MCF 10A (cell line): ENCODE measurements at regions of chr3 and their contacts with region 1.

Region 1: GRCh38 chr3:197224034-197224444 is 74.4 kb downstream of the DLG1 start:
- DNase-seq: peak; percentile 67
- H3K4me3 Mint-ChIP-seq: no peak overlapping the region
- H3K27ac Mint-ChIP-seq: no peak overlapping the region
- H3K4me1 Mint-ChIP-seq: peaks cover 23% of the 10 kb centered on the region
- H3K27me3 Mint-ChIP-seq: no peaks in the 10 kb centered on the region
- CTCF ChIP-seq: peak; percentile 38

Region 2: DNA sequence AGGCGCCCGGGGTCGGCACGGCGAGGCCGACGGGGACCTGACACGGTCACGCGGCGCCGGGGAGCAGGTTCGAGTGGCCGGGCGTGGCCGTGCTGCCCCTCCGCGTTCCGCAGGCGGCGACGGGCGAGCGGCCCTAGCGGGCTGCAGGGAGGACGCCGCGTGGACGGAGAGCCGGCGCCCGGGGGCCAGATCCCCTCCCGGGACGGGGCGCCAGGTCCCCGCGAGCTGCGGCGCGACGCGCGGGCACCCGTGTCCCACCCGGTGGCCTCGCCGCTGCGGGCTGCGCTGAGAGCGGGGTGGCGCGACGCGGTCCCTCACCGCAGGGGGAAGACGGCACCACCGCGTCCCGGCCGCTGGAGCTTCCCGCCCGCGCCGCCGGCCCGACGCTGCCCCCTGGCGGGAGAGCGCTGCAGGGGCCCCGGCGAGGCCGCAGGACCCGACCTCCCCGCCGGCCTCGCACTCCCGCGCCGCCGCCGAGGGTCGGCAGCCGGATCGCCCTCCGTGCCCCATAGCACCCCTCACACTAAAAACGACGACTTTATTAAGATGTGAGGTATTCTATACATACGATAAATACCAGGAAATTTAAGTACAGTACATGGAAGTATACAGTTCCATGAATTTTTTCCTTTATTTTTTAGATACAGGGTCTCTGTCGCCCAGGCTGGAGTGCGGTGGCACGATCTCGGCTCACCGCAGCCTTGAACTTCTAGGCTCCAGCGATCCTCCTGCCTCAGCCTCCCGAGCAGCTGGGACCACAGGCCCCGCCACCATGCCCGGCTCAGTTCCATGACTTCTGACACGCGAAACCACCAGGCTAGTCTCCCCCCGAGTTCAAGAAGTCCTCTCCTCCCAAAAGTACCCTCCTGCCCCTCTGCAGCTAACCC is 254.1 kb before region 1 on chr3:
- CTCF ChIA-PET with region 1: no interaction called
- POLR2A ChIA-PET with region 1: no interaction called
- intact Hi-C with region 1: no loop called
- DNase-seq: peak; percentile 54
- H3K4me3 Mint-ChIP-seq: peak overlapping the region; percentile 68
- H3K27ac Mint-ChIP-seq: no peak overlapping the region
- H3K4me1 Mint-ChIP-seq: no peaks in the 10 kb centered on the region
- H3K27me3 Mint-ChIP-seq: no peaks in the 10 kb centered on the region
- CTCF ChIP-seq: peak; percentile 74

Region 3: GRCh38 chr3:197234947-197235914 is 11.2 kb after region 1 on chr3:
- CTCF ChIA-PET with region 1: interaction called, 18 read pairs
- POLR2A ChIA-PET with region 1: interaction called, 7 read pairs
- intact Hi-C with region 1: no loop called
- DNase-seq: peak; percentile 27
- H3K4me3 Mint-ChIP-seq: no peak overlapping the region
- H3K27ac Mint-ChIP-seq: peak overlapping the region; percentile 16
- H3K4me1 Mint-ChIP-seq: peaks cover 26% of the 10 kb centered on the region
- H3K27me3 Mint-ChIP-seq: no peaks in the 10 kb centered on the region
- CTCF ChIP-seq: no peak

Region 4: DNA sequence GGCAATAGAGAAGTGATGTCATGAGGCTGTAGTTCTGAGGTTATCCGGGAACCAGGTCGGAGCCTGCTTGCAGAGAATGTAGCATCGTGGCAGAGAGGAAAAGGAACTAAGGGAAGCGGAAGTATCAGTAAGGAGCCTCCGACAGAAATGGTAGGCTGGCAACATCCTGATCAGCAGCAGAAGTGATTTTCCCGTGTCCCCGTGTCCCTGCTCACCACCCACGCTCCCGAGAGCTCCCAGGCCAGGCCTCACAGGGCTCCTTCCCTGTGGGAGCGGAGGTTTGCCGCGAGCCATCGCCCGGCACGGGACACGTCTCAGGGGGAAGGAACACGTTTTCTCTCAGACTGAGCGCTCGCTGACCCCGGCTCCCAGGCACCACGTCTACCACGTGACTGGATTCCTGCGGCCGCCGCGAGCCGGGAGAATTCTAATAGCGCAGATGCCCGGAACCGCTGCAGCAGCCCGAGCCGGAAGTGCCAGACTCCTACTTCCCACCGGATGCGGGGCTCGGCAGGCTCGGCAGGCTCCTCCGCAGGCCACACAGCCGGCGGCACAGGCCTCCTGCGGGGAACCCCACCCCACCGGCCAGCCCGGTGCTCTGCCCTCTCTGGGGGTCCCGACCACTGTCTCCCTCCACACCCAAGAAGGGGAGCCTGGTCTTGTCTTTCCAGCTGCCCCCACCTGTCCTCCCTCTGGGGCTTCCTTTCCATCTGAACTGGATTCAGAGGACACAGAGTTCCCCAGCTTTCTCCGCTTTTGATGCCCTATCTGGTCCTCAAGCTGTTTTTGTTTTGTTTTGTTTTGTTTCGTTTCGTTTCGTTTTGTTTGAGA is 232.4 kb after region 1 on chr3:
- CTCF ChIA-PET with region 1: interaction called, 6 read pairs
- POLR2A ChIA-PET with region 1: no interaction called
- intact Hi-C with region 1: loop called (anchors 1 kb)
- DNase-seq: peak; percentile 85
- H3K4me3 Mint-ChIP-seq: peak overlapping the region; percentile 72
- H3K27ac Mint-ChIP-seq: peak overlapping the region; percentile 91
- H3K4me1 Mint-ChIP-seq: peaks cover 11% of the 10 kb centered on the region
- H3K27me3 Mint-ChIP-seq: no peaks in the 10 kb centered on the region
- CTCF ChIP-seq: no peak